ENCODE measurements at regions of chr4 and their contacts with region 1.

Region 1: DNA sequence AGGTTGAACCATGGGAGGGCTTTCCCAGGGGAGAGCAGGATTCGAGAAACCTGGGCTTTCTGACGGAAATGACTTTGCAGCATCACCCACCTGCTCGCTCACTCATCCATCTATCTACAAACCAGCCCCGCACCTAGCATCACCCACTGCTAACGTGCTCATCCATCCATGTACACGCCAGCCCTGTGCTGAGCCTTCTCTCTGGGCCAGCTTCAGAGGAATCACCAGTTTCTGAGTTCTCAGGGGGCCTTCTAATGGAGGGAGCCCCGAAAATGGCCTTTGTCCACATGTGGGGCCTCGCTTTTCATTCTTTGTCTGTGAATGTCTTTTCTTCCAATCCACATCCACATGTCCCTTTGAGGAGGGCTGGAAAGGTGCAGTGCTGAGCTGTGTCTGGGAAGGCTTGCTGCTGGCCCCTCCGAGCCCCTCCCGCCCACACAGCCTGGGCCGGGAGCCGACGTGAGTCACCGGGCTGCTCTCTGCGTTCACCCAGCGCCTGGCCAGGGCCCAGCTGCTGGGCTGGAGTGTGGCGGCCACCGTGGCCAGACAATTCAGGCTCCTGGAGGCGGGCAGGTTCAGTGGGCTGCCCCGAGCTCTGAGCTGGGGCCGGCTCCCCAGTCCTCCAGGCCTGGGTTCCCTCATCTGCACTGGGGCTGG is 14.7 kb downstream of the SORCS2 start:
- DNase-seq: peak; percentile 86

Region 2: GRCh38 chr4:7238300-7238960 is 31.4 kb after region 1 on chr4:
- intact Hi-C with region 1: loop called (anchors 2 kb)
- DNase-seq: no peak

Region 3: DNA sequence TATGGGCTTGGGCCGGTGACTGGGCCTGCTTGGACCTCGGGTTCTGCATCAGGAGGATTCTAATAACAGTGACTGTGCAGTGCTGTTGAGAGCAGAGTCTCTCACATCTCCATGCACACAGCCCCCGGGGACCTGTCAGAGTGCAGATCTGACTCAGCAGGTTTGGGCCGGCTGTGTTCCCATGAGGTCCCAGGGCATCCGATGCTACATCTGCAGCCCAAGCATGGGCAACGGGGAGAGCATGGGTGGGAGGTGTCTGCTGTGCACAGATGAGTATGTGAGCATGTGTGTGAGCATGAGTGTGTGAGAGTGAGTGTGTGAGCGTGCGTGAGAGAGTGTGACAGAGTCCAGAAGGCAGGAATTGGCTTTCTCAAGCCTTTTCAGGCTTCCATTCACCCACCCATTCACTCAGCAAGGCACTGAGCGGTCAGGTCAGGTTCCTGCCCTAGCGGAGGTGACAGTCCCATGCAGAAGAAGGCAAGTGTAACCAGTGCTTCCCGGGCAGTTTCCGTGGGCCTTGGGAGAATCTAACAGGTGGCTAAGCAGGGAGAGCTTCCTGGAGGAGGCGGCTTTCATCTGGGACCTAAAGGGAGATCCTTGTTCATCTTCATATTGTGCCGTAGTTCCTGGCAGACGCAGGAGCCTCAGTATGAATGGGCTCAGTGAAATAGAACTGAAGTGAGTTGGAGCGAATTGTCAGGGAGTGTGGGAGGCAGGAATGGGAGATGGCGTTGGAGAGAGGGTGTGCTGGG is 47.9 kb after region 1 on chr4:
- intact Hi-C with region 1: loop called (anchors 5 kb)
- DNase-seq: no peak

Region 4: GRCh38 chr4:7280926-7281690 is 74.1 kb after region 1 on chr4:
- intact Hi-C with region 1: no loop called
- DNase-seq: no peak

Region 5: GRCh38 chr4:7328898-7329638 is 122.0 kb after region 1 on chr4:
- intact Hi-C with region 1: no loop called
- DNase-seq: peak; percentile 84

Region 6: GRCh38 chr4:7581477-7581876 is 374.4 kb after region 1 on chr4:
- intact Hi-C with region 1: no loop called
- DNase-seq: no peak